ENCODE measurements at regions of chr19 and their contacts with region 1.

Region 1: DNA sequence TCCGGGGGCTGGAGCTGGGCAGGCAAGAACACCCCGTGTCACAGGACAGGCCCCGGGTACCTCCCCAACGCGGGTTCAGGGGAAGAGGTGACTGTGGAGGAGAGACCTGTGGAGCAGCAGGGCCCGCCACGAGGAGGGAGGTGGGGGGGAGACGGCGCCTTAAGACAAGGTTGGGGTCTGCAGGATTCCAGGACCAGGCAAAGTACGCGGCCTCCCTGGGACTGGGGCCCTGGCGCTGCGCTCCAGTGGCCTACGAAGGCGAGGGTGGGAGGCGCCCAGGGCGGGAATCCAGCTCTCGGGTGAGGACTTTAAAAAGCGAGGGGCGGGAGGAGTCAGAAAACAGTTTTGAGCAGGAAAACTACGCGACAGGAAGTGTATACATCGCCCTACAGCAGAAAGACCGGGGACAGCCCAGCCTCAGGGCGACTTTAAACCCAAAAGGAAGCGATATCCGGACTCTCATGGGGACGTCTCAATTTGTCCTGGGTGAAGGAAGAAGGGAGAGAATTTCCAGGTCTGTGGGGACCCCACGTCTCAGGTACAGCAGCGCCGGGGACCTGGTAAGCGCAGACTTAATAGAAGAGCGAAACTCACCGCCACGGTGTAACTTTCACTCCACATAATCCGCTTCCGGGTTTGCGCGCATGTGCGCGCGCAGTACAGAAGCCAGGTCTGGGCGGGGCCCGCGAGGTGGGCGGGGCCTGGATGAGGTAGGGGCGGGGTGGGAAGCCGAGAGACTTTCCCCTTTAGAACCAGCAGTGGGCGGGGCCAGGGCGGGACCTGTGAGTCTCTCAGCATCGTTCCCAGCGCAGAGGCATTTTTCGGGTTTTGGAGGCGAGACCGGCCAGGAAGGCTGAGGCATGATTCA is at the start of gene ZNF83:
- DNase-seq: peak; percentile 85 to 95 (median 92)
- H3K4me3 ChIP-seq: peak within 1 kb of the TSS; percentile 72 to 98
- H3K4me3 Mint-ChIP-seq: peak within 1 kb of the TSS; percentile 91 to 99 (median 97)
- H3K27ac ChIP-seq: peak within 1 kb of the TSS; percentile 87
- H3K27ac Mint-ChIP-seq: peak within 1 kb of the TSS; percentile 90 to 99 (median 98)
- H3K4me1 ChIP-seq: peaks cover 20% of the 10 kb centered on the region
- H3K4me1 Mint-ChIP-seq: peaks cover 10 to 23% (median 16%) of the 10 kb centered on the region in 4 donors
- H3K27me3 ChIP-seq: no peaks in the 10 kb centered on the region
- H3K27me3 Mint-ChIP-seq: no peaks in the 10 kb centered on the region
- total RNA-seq, gene ZNF83: 128 to 130 TPM

Region 2: DNA sequence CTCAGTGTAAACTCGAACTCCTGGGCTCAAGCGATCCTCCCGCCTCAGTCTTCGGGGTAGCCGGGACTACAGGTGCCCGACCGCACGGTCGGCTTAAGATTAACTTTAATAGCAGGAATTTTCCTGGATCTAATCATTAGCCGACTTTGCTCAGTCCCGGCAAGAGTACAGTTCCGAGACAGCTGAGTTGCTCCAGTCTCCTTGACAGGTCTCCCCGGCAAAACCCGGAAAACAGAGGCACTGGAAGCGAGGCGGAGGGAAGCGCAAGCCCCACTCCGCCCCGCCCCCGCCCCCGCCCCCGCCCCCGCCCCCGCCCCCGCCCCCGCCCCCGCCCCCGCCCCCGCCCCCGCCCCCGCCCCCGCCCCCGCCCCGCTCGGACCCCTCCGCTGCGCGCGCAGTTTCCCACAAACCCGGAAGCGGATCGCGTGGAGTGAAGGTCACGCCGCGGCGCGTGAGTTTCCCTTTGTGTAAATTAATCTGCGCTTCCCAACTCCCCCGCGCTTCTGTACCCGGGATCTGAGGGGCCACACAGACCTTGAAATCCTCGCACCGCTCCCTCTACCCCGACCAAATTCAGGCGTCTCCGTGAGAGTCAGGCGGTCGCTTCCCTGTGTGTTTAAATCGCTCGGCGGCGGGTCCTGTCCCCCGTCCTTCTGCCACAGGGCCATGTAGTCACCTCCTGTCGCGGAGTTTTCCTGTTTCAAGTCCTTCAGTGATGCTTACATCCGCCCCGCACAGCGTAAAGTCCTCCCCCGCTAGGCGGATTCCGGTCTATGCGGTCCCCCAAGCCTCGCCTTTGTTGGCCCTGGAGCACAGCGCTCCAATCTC is 341.0 kb before region 1 on chr19 and contains the start of gene ZNF480:
- CTCF ChIA-PET with region 1: no interaction called
- POLR2A ChIA-PET with region 1: interaction called, 3 read pairs
- intact Hi-C with region 1: loop called (anchors 1 kb)
- DNase-seq: peak; percentile 87 to 89 (median 87)
- H3K4me3 ChIP-seq: peak within 1 kb of the TSS; percentile 89 to 92
- H3K4me3 Mint-ChIP-seq: peak within 1 kb of the TSS; percentile 94 to 99 (median 96)
- H3K27ac ChIP-seq: peak within 1 kb of the TSS; percentile 72
- H3K27ac Mint-ChIP-seq: peak within 1 kb of the TSS; percentile 97 to 100 (median 98)
- H3K4me1 ChIP-seq: peaks cover 16% of the 10 kb centered on the region
- H3K4me1 Mint-ChIP-seq: peaks cover 17 to 24% (median 19%) of the 10 kb centered on the region in 4 donors
- H3K27me3 ChIP-seq: no peaks in the 10 kb centered on the region
- H3K27me3 Mint-ChIP-seq: peaks cover 0 to 3% of the 10 kb centered on the region in 2 donors
- total RNA-seq, gene ZNF480: 26.7 to 26.9 TPM

Region 3: GRCh38 chr19:52336117-52336790 is 301.7 kb before region 1 on chr19 and contains the start of gene ZNF610:
- CTCF ChIA-PET with region 1: no interaction called
- POLR2A ChIA-PET with region 1: no interaction called
- intact Hi-C with region 1: loop called (anchors 1 kb)
- DNase-seq: peak; percentile 82 to 85 (median 83)
- H3K4me3 ChIP-seq: peak within 1 kb of the TSS; percentile 76 to 94
- H3K4me3 Mint-ChIP-seq: peak within 1 kb of the TSS; percentile 97 to 99 (median 98)
- H3K27ac ChIP-seq: peak within 1 kb of the TSS; percentile 68
- H3K27ac Mint-ChIP-seq: peak within 1 kb of the TSS; percentile 93 to 98 (median 97)
- H3K4me1 ChIP-seq: peaks cover 8% of the 10 kb centered on the region
- H3K4me1 Mint-ChIP-seq: peaks cover 12 to 18% (median 15%) of the 10 kb centered on the region in 4 donors
- H3K27me3 ChIP-seq: no peaks in the 10 kb centered on the region
- H3K27me3 Mint-ChIP-seq: no peaks in the 10 kb centered on the region
- total RNA-seq, gene ZNF610: 4.8 to 6.0 TPM

Region 4: DNA sequence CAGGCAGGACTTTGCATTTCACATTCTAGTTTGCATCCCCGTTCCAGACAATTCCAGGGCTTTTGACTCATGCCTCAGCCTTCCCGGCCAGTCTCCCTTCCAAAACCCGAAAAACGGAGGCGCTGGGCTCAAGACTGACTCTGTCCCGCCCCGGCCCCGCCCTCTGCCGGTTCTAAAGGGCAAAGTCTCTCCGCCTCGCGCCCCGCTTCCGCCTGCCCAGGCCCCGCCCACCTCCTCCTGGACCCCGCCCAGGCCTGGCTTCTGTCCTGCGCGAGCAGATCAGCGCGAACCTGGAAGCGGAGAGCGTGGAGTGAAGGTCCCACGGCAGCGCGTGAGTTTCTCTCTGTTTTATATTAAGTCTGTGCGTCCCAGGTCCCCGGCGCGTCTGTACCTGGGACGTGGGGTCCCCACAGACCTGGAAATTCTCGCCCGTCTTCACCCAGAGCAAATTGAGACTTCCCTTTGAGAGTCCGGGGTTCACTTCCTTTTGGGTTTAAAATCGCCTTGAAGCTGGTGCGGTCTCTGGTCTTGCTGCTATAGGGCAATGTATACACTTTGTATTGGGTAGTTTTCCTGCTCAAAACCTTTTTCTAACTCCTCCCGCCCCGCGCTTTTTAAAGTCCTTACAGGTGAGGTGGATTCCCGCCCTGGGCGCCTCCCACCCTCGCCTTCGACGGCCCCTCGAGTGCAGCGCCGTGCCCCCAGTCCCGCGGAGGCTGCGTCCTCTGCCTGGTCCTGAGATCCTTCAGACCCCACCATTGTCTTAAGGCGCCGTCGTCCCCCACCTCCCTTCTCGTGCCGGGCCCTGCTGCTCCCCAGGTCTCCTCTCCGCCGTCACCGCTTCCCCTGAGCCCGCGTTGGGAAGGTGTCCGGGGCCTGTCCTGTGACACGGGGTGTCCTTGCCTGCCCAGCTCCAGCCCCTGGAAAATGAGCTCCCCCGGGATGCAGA is 36.7 kb before region 1 on chr19:
- CTCF ChIA-PET with region 1: no interaction called
- POLR2A ChIA-PET with region 1: interaction called, 6 read pairs
- intact Hi-C with region 1: loop called (anchors 1 kb)
- DNase-seq: peak; percentile 90 to 92 (median 90)
- H3K4me3 ChIP-seq: peak overlapping the region; percentile 57 to 63
- H3K4me3 Mint-ChIP-seq: peak overlapping the region; percentile 93 to 97 (median 94)
- H3K27ac ChIP-seq: peak overlapping the region; percentile 66
- H3K27ac Mint-ChIP-seq: peak overlapping the region; percentile 65 to 96 (median 93)
- H3K4me1 ChIP-seq: peaks cover 15% of the 10 kb centered on the region
- H3K4me1 Mint-ChIP-seq: peaks cover 16 to 40% (median 27%) of the 10 kb centered on the region in 4 donors
- H3K27me3 ChIP-seq: no peaks in the 10 kb centered on the region
- H3K27me3 Mint-ChIP-seq: no peaks in the 10 kb centered on the region

Region 5: DNA sequence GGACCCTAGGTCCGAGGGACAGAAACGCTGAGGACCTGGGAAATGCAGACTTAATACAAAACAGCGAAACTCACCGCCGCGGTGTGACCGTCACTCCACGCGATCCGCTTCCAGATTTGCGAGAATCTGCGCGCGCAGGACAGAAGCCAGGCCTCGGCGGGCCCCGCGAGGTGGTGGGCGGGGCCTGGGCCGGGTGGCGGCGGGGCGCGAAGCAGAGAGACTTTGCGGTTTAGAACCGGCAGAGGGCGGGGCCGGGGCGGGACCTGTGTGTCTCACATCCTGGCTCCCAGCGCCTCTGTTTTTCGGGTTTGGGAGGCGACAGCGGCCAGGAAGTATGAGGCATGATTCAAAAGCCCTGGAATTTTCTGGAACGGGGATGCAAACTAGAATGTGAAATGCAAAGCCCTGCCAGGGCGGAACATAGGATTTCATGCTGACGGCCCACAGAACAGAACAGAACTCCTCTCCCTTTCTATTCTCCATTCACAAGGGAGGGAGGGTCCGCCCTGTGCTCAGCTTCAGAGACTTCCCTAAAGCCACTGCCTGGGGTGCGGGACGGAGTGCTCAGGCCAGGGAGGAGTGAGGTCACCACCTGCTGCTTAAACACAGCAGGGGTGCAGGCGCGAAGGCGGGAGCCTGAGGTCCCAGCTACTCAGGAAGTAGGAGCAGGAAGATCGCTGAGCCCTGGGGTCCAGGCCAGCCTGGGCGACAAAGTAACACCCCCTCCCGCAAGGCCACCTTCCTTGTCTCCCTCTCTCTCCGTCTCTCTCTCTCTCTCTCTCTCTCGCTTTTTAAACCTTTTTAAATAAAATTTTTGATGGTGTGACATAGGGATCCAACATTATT is 52.6 kb after region 1 on chr19:
- CTCF ChIA-PET with region 1: no interaction called
- POLR2A ChIA-PET with region 1: no interaction called
- intact Hi-C with region 1: loop called (anchors 1 kb)
- DNase-seq: peak; percentile 86 to 92 (median 89)
- H3K4me3 ChIP-seq: peak overlapping the region; percentile 66 to 90
- H3K4me3 Mint-ChIP-seq: peak overlapping the region; percentile 90 to 99 (median 96)
- H3K27ac ChIP-seq: peak overlapping the region; percentile 78
- H3K27ac Mint-ChIP-seq: peak overlapping the region; percentile 88 to 96 (median 94)
- H3K4me1 ChIP-seq: peaks cover 23% of the 10 kb centered on the region
- H3K4me1 Mint-ChIP-seq: peaks cover 18 to 35% (median 26%) of the 10 kb centered on the region in 4 donors
- H3K27me3 ChIP-seq: no peaks in the 10 kb centered on the region
- H3K27me3 Mint-ChIP-seq: no peaks in the 10 kb centered on the region

Region 6: GRCh38 chr19:52734893-52735661 is 97.1 kb after region 1 on chr19 and contains the start of gene ZNF611:
- CTCF ChIA-PET with region 1: no interaction called
- POLR2A ChIA-PET with region 1: interaction called, 3 read pairs
- intact Hi-C with region 1: loop called (anchors 1 kb)
- DNase-seq: peak; percentile 98 to 99 (median 98)
- H3K4me3 ChIP-seq: peak within 1 kb of the TSS; percentile 94 to 98
- H3K4me3 Mint-ChIP-seq: peak within 1 kb of the TSS; percentile 90 to 97 (median 94)
- H3K27ac ChIP-seq: peak within 1 kb of the TSS; percentile 80
- H3K27ac Mint-ChIP-seq: peak within 1 kb of the TSS; percentile 94 to 98 (median 97)
- H3K4me1 ChIP-seq: peaks cover 22% of the 10 kb centered on the region
- H3K4me1 Mint-ChIP-seq: peaks cover 17 to 34% (median 25%) of the 10 kb centered on the region in 4 donors
- H3K27me3 ChIP-seq: no peaks in the 10 kb centered on the region
- H3K27me3 Mint-ChIP-seq: no peaks in the 10 kb centered on the region
- total RNA-seq, gene ZNF611: 52.8 to 53.7 TPM

Region 7: DNA sequence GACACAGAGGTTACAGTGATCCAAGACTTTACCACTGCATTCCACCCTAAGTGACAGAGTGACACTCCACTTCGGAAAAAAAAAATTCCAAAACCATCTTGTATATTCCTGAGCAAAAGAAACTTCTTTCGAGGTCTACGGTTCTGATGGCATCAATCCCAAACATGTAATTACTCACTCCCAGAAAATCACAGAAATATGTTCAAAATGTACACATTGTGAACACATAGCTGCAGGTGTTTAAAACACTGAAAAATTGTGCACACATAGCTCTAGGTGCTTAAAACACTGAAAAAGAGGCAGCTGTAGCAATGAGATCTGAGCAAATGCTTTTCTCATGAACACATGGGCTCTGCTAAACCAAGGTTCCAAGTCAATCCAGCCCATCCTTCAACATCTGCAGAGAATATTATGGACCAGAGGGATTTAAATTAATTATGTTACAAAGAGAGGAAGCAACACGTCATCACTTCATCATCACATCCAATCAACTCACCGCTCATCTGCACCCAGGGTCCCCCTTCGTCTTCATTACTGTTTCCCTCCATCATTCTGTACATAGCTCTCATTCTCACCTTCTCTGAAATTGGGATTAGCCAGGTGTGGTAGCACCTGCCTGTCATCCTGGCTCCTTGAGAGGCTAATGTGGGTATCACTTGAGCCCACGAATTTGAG is 233.6 kb after region 1 on chr19:
- CTCF ChIA-PET with region 1: no interaction called
- POLR2A ChIA-PET with region 1: no interaction called
- intact Hi-C with region 1: no loop called
- DNase-seq: no peak
- H3K4me3 ChIP-seq: no peak overlapping the region
- H3K4me3 Mint-ChIP-seq: no peak overlapping the region
- H3K27ac ChIP-seq: no peak overlapping the region
- H3K27ac Mint-ChIP-seq: no peak overlapping the region
- H3K4me1 ChIP-seq: no peaks in the 10 kb centered on the region
- H3K4me1 Mint-ChIP-seq: no peaks in the 10 kb centered on the region
- H3K27me3 ChIP-seq: no peaks in the 10 kb centered on the region
- H3K27me3 Mint-ChIP-seq: no peaks in the 10 kb centered on the region